Sigmoid colon (tissue), 7 donors: ENCODE measurements at regions of chr17 and their contacts with region 1.

Region 1: DNA sequence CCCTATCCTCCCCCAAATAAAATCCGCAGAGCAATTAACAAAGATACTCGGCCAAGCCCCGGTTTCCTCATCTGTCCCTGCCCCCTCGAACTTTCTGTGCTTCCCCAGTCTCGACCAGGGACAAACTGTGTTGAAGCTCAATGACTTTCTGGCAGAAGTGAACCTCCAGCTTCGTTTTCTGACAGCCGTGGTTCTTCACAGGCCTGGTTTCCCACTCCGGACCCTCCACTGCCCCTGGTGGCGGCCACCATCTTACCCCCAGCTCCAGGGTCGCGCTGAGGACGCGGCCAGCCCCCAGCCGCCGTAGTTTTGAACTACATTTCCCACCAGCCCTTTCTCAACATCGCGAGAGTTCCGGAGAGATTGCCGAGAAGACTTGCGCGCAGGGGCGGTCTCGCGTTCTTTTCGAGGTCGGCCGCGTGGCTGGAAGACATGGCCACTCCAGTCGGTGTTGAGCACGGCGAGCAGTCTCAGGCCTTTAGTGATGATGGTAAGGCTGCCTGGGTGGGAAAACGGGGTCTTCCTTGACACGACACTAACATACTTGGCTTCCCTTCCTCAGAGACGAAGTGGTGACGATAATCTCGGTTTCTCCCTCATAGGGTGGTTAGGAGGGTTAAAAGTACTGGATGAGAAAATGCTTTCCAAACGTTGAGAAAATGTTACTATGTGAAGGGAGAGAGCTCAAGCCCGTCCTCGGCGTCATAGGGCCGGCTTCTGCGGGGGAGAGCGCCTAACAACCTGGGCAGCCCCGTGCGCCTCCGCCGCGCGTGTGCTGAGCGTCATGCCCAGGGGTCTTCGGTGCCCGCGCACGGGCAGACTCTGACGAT is 17.7 kb downstream of the PRCD start:
- DNase-seq: peak; percentile 97
- H3K4me3 ChIP-seq: peak overlapping the region; percentile 53 to 75 (median 68)
- H3K27ac ChIP-seq: peak overlapping the region; percentile 84 to 95 (median 87)
- H3K4me1 ChIP-seq: peaks cover 0 to 52% (median 51%) of the 10 kb centered on the region in 4 donors
- H3K27me3 ChIP-seq: no peaks in the 10 kb centered on the region
- CTCF ChIP-seq: peak; percentile 43 to 72 (median 57)
- EP300 ChIP-seq: peak in 1 of 4 donors; percentile 7
- POLR2A ChIP-seq: peak; percentile 64 to 70

Region 2: GRCh38 chr17:76623271-76624146 is 65.9 kb after region 1 on chr17:
- intact Hi-C with region 1: loop called (anchors 5 kb)
- DNase-seq: peak; percentile 87
- H3K4me3 ChIP-seq: no peak overlapping the region
- H3K27ac ChIP-seq: no peak overlapping the region
- H3K4me1 ChIP-seq: peaks cover 0 to 9% (median 4%) of the 10 kb centered on the region in 4 donors
- H3K27me3 ChIP-seq: no peaks in the 10 kb centered on the region
- CTCF ChIP-seq: peak; percentile 84 to 93 (median 92)
- EP300 ChIP-seq: no peak
- POLR2A ChIP-seq: no peak

Region 3: GRCh38 chr17:76671123-76671911 is 113.7 kb after region 1 on chr17:
- intact Hi-C with region 1: loop called (anchors 5 kb)
- DNase-seq: peak; percentile 100
- H3K4me3 ChIP-seq: peak overlapping the region; percentile 41 to 65 (median 59)
- H3K27ac ChIP-seq: peak overlapping the region; percentile 81 to 90 (median 86)
- H3K4me1 ChIP-seq: peaks cover 0 to 16% (median 10%) of the 10 kb centered on the region in 4 donors
- H3K27me3 ChIP-seq: no peaks in the 10 kb centered on the region
- CTCF ChIP-seq: no peak
- EP300 ChIP-seq: no peak
- POLR2A ChIP-seq: no peak